ENCODE measurements at regions of chr7 and their contacts with region 1.

Region 1: GRCh38 chr7:22110227-22110839 is 164.6 kb upstream of the CDCA7L start:
- DNase-seq: peak in 1 of 2 donors; percentile 55
- ATAC-seq: peak; percentile 69 to 95 (median 80)
- H3K4me3 ChIP-seq: no peak overlapping the region
- H3K27ac ChIP-seq: no peak overlapping the region
- H3K4me1 ChIP-seq: no peaks in the 10 kb centered on the region
- H3K27me3 ChIP-seq: peaks cover 0 to 4% (median 0%) of the 10 kb centered on the region in 3 donors
- CTCF ChIP-seq: peak; percentile 87

Region 2: GRCh38 chr7:22295402-22296264 is 185.3 kb after region 1 on chr7:
- intact Hi-C with region 1: loop called in 1 of 2 experiments (anchors 5 kb)
- DNase-seq: no peak
- ATAC-seq: peak in 1 of 4 donors; percentile 37
- H3K4me3 ChIP-seq: no peak overlapping the region
- H3K27ac ChIP-seq: no peak overlapping the region
- H3K4me1 ChIP-seq: no peaks in the 10 kb centered on the region
- H3K27me3 ChIP-seq: no peaks in the 10 kb centered on the region
- CTCF ChIP-seq: peak; percentile 13